ENCODE measurements at regions of chr1 and their contacts with region 1.

Region 1: DNA sequence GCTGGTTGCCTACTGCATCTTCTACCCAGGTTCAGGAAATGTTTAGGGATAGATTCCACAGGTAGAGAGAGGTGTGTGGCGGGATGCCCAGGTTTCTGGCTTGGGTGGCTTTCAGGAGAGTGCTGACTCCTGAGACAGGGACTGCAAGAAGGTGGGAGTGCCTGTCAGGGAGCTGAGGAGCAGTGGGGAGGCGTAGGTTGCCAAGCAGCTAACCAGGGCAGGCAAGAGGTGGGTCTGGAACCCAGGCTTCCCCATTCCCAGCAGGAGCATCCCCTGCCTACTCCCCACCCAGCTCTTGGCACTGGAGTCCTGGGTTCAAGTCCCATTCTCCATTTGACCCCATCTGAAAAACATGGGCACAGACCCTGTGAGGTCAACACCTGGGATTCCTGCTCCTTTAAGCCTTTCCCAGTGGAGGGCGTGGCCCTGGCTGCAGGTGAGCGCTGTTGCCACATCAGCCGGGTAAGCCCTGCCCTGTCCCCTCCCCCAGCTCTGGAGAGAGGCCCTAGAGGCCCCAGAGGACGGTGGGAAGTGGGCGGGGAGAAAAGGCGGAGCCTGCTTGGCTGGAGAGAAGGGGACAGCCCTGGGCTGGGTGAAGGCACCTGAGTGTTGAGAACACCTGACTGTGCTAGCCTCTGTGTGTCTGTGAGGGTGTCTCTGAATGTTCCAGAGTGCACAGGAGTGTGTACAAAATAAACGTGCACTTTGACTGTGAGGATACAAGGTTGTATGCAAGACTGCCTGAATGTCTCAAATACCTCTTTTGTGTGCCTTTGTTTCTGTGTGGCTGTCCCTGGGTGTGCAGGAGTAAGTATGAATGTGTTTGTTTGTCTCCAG is 14.0 kb upstream of the SYNC start:
- DNase-seq: peak; percentile 42 to 52 (median 51)
- H3K4me3 ChIP-seq: peak overlapping the region in 2 of 7 experiments; percentile 28 to 60
- H3K27ac ChIP-seq: peak overlapping the region in 1 of 2 experiments; percentile 44
- H3K4me1 ChIP-seq: peaks cover 4 to 32% (median 22%) of the 10 kb centered on the region in 4 experiments
- H3K27me3 ChIP-seq: no peaks in the 10 kb centered on the region

Region 2: DNA sequence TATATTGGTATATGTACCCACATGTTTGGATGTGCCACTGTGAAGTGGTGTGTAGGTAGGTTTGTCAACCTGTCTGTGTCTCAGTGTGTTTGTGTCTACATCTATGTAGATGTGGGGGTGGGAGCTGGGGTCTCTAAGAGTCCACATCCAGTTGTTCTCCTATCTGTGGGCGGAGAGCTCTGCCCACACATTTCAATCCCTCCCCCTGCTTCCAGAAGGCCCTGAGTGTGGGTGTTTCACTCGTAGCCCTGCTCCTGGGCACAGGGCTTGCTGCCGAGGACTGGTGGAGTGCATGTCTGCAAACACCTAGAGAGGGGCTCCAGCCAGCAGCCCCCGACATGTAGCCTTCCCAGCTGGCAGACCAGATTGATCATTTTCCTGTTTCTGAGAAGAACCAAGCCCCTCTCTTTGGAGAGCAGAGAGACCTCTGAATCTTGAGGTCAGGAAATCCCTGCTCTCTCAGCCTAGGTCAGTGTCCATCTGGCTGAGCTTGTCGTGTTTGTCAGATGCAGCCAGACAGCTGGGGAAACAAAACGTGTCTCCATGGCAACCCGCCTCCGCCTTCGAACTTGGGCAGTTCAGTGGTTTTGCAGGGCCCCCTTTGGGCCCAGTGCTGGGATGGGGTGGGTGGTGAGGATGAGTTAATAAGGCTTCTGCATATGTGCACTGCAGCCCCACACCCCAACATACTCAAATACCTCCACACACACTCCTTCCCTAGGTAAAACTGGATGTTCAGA is 17.2 kb after region 1 on chr1:
- CTCF ChIA-PET with region 1: interaction called, 91 read pairs
- POLR2A ChIA-PET with region 1: no interaction called
- DNase-seq: no peak
- H3K4me3 ChIP-seq: no peak overlapping the region
- H3K27ac ChIP-seq: no peak overlapping the region
- H3K4me1 ChIP-seq: peaks cover 0 to 21% (median 4%) of the 10 kb centered on the region in 4 experiments
- H3K27me3 ChIP-seq: no peaks in the 10 kb centered on the region

Region 3: DNA sequence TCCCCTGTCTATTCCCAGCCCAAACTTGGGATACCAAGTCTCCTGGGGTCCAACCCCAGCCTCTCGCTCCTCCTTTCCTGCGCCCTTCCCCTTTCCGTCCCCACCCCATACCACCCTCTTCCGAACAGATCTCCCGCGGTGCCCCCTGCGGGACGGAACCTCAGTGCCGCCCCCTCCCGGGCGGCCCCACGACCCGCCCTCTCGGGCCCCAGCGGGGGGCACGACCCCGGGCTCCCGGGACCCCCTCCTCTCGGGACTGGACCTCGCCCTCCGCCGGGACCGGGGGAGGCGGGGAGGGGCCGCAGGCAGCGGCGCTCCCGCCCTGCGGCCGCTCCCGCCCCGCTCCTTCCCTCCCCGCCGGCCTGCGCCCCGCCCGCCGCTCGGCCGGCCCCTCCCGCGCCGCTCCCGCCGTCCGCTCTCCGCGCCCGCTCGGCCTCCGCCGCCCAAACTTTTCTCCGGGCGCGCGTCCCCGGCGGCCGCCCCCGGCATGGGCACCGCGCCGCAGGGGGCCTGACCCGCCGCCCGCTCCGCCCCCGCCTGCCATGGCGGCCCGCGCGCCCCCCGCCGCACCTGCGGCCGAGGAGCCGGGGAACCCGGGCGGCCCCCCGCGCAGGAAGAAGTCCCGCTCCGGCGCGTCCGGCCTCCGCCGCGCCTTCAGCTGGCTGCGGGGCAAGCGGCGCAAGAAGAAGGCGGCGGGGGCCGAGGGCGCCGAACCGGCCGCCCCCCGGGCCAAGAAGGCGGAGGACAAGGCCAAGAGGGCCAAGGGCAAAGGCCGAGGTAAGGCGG is 25.1 kb after region 1 on chr1:
- CTCF ChIA-PET with region 1: interaction called, 16 read pairs
- POLR2A ChIA-PET with region 1: interaction called, 7 read pairs
- DNase-seq: peak in 2 of 3 donors; percentile 50 to 60
- H3K4me3 ChIP-seq: peak overlapping the region; percentile 59 to 83 (median 75)
- H3K27ac ChIP-seq: peak overlapping the region in 1 of 2 experiments; percentile 68
- H3K4me1 ChIP-seq: peaks cover 0 to 28% (median 24%) of the 10 kb centered on the region in 4 experiments
- H3K27me3 ChIP-seq: no peaks in the 10 kb centered on the region

Region 4: GRCh38 chr1:32753532-32754312 is 37.2 kb after region 1 on chr1:
- CTCF ChIA-PET with region 1: interaction called, 38 read pairs
- POLR2A ChIA-PET with region 1: no interaction called
- DNase-seq: peak; percentile 58 to 83 (median 76)
- H3K4me3 ChIP-seq: peak overlapping the region; percentile 23 to 72 (median 64)
- H3K27ac ChIP-seq: peak overlapping the region in 1 of 2 experiments; percentile 35
- H3K4me1 ChIP-seq: peaks cover 0 to 41% (median 24%) of the 10 kb centered on the region in 4 experiments
- H3K27me3 ChIP-seq: no peaks in the 10 kb centered on the region

Region 5: DNA sequence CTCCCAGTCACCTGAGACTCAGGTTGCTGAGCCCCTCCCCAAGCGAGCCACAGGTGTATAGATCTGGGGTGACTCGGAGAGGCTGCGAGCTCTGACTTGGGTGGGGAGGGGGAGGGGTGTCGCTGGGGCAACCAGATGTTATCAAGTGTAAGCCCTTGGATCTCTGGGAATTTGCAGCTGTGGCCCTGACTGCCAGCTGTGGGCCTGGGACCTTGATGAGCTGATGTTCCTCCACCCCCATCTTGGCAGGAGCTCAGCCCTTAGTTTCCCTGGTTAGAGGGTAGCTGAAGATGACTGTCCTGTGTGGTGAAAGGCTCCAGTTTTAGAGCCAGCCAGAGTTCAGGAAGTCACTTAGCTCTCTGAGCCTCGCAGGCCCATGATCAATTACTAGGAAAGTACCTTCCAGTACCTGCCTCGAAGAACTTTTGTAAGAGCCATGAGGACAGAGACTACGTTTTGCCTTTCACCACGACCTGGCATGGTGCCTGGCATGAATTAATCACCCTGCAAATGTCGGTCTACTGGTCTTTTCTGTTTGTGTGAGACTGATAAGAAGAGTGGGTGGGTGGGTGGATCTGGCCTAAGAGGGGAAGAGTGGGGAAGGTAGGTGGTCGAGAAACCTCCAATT is 44.8 kb after region 1 on chr1:
- CTCF ChIA-PET with region 1: interaction called, 210 read pairs
- POLR2A ChIA-PET with region 1: interaction called, 3 read pairs
- DNase-seq: peak; percentile 61 to 86 (median 85)
- H3K4me3 ChIP-seq: peak overlapping the region in 1 of 7 experiments; percentile 7
- H3K27ac ChIP-seq: peak overlapping the region in 1 of 2 experiments; percentile 27
- H3K4me1 ChIP-seq: peaks cover 0 to 44% (median 29%) of the 10 kb centered on the region in 4 experiments
- H3K27me3 ChIP-seq: no peaks in the 10 kb centered on the region

Region 6: DNA sequence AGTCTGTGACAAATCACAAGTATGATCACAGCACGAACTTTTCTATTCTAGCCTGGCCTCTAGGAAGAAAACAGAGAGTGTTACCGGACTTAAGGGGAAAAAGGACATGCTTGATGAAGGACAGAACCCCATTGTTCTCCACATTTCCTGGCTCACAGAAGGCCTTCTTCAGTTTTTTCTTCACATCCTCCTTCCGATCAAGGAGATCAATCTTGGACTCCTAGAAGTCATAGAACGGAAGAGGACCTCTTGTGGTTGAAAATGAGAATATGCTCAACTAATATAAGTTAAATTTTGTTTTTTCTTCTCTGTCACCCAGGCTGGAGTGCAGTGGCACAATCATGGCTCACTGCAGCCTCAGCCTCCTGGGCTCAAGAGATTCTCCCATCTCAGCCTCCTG is 70.3 kb after region 1 on chr1:
- CTCF ChIA-PET with region 1: interaction called, 16 read pairs
- POLR2A ChIA-PET with region 1: no interaction called
- DNase-seq: peak; percentile 28 to 52 (median 51)
- H3K4me3 ChIP-seq: no peak overlapping the region
- H3K27ac ChIP-seq: no peak overlapping the region
- H3K4me1 ChIP-seq: no peaks in the 10 kb centered on the region
- H3K27me3 ChIP-seq: no peaks in the 10 kb centered on the region

Measured in common myeloid progenitor, CD34-positive (primary cell).